ENCODE measurements at regions of chr4 and their contacts with region 1.

Region 1: GRCh38 chr4:150209140-150209829 is 131.0 kb downstream of the DCLK2 start:
- DNase-seq: peak; percentile 51 to 82 (median 70)
- ATAC-seq: peak; percentile 39
- H3K4me3 ChIP-seq: no peak overlapping the region
- H3K27ac ChIP-seq: no peak overlapping the region
- H3K4me1 ChIP-seq: peaks cover 20% of the 10 kb centered on the region
- H3K27me3 ChIP-seq: no peaks in the 10 kb centered on the region
- CTCF ChIP-seq: peak in 6 of 7 experiments; percentile 26 to 62 (median 48)
- POLR2A ChIP-seq: no peak

Region 2: DNA sequence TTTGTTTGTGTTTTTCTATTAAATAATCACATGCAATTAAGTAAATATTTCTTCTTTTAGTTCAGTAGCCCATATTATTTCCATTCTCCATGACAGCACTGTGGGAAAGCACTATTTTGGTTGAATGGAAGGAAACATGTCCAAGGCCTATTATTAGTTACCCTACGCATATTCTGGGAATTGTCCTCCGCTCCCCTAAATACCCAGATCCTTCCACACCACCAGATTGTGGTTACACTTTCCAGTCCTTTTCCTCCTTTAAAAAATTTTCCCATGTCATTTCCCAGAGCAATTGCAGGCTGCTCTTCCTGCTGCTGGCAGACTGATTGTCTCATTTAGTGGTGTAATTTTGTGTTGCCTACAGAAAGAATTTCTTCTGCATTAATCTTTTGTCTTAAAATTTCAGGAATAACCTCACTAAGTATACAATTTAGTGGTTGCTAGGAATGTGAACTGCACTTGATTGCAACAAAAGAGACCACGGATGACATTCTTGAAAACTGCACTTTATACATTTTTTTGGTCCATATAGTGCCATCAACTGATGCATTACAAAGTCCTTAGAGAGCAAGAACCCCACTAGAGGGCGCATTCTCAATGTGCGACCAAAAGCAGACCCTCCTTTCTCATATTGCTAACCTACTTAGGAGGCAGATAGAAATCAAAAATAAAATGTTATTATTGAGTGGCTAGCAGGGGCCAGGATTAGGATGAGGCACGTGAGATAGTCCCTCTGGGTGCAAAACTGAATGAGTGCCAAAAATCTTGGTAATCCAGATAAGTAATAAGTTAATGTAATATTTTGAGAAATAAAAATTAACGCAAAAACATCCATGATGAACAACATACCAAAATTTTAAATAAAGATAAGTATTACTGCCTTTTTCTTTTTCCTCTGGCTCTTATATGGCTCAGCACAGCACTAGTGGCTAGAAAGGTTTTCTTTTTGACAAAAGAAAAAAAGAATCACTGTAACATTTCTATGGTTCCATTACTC is 294.9 kb before region 1 on chr4:
- intact Hi-C with region 1: no loop called
- DNase-seq: peak in 3 of 4 donors; percentile 14 to 37 (median 18)
- ATAC-seq: no peak
- H3K4me3 ChIP-seq: no peak overlapping the region
- H3K27ac ChIP-seq: no peak overlapping the region
- H3K4me1 ChIP-seq: no peaks in the 10 kb centered on the region
- H3K27me3 ChIP-seq: no peaks in the 10 kb centered on the region
- CTCF ChIP-seq: peak in 6 of 7 experiments; percentile 17 to 40 (median 26)
- POLR2A ChIP-seq: no peak

Region 3: GRCh38 chr4:150010525-150011126 is 198.7 kb before region 1 on chr4:
- intact Hi-C with region 1: loop called (anchors 5 kb)
- DNase-seq: peak; percentile 42 to 67 (median 63)
- ATAC-seq: peak; percentile 85
- H3K4me3 ChIP-seq: no peak overlapping the region
- H3K27ac ChIP-seq: no peak overlapping the region
- H3K4me1 ChIP-seq: peaks cover 7% of the 10 kb centered on the region
- H3K27me3 ChIP-seq: no peaks in the 10 kb centered on the region
- CTCF ChIP-seq: peak; percentile 22 to 80 (median 70)
- POLR2A ChIP-seq: no peak